ENCODE measurements at regions of chr1 and their contacts with region 1.

Region 1: DNA sequence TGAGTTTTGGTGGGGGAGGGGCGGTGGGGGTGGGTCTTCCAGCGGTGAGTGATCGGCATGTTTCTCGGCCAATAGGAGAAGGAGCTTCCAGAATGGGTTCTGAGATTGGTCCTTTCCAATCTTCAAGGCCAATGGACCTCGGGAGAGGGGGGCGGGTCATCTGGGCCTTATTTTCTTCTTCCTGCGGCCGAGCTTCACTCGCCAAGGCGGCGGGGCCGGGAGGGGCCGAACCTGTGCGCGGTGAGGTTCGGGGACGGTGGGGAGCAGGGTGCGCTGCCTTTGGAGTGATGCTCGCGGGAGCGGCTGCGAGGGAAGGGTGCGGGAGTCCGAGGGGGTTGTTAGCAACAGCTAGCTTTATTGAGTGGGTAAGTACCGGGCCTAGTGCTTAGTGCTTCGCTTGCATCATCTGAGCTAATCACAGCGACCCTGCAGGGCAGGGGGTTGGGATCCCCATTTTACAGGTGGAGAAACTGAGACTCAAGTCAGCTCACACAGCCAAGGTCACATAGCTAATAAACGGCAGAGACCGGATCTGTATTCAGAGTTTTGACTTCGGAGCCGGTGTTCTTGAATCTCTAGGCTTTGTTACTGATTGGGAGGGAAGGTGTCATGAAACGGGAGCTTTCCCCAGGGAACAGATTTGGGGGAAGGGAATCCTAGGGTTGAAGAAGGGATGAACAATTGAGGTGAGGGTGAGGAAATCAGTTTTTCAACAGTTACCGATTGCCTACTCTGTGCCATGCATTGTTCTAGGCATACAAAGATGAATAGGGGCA is 549 bp downstream of the KDM4A start:
- DNase-seq: peak; percentile 89
- ATAC-seq: peak; percentile 72
- H3K4me3 Mint-ChIP-seq: peak overlapping the region; percentile 92
- H3K27ac Mint-ChIP-seq: peak overlapping the region; percentile 99
- H3K4me1 Mint-ChIP-seq: peaks cover 26% of the 10 kb centered on the region
- H3K27me3 Mint-ChIP-seq: peaks cover 9% of the 10 kb centered on the region

Region 2: GRCh38 chr1:43383449-43383848 is 267.0 kb before region 1 on chr1:
- POLR2A ChIA-PET with region 1: no interaction called
- DNase-seq: no peak
- ATAC-seq: no peak
- H3K4me3 Mint-ChIP-seq: no peak overlapping the region
- H3K27ac Mint-ChIP-seq: no peak overlapping the region
- H3K4me1 Mint-ChIP-seq: peaks cover 16% of the 10 kb centered on the region
- H3K27me3 Mint-ChIP-seq: no peaks in the 10 kb centered on the region

Region 3: GRCh38 chr1:43405219-43405875 is 245.2 kb before region 1 on chr1:
- POLR2A ChIA-PET with region 1: no interaction called
- DNase-seq: no peak
- ATAC-seq: no peak
- H3K4me3 Mint-ChIP-seq: no peak overlapping the region
- H3K27ac Mint-ChIP-seq: no peak overlapping the region
- H3K4me1 Mint-ChIP-seq: peaks cover 2% of the 10 kb centered on the region
- H3K27me3 Mint-ChIP-seq: no peaks in the 10 kb centered on the region

Region 4: DNA sequence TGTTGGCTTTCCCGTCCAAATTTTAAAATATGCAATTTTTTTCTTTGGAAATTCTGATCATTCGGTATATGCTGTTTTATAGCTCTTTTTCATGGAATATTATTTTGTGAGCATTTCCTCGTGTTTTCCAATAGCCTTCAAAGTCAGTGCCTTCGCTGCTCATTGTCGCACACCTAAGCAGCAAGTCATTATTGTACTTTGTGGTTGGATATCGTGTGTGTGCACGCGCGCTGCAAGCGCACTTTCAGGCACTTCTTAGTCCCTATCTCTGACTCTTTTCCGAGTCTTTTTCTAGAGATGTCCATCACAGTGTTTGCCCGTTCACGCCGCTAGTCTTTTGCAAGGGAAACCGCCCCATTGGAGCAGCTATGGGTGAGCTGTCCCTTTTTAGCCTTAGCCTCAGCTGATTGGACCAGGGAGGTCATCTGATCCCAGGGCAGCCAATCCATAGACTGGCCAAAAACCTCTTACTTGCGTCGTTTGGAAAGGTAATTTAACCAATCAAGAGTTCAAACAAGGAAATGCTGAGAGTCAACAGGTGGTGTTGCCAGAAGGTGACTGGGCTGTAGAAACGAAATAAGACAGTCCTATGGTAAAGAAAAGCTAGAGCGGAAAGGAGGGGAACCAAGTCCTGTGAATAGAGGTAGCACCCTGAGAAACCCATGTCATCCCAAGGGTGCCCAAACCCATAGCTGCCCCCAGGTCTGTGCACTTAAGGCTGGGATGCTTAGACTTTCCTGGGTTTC is 196.1 kb before region 1 on chr1:
- POLR2A ChIA-PET with region 1: interaction called, 12 read pairs
- DNase-seq: peak; percentile 60
- ATAC-seq: peak; percentile 87
- H3K4me3 Mint-ChIP-seq: peak overlapping the region; percentile 84
- H3K27ac Mint-ChIP-seq: peak overlapping the region; percentile 80
- H3K4me1 Mint-ChIP-seq: peaks cover 16% of the 10 kb centered on the region
- H3K27me3 Mint-ChIP-seq: peaks cover 38% of the 10 kb centered on the region

Region 5: DNA sequence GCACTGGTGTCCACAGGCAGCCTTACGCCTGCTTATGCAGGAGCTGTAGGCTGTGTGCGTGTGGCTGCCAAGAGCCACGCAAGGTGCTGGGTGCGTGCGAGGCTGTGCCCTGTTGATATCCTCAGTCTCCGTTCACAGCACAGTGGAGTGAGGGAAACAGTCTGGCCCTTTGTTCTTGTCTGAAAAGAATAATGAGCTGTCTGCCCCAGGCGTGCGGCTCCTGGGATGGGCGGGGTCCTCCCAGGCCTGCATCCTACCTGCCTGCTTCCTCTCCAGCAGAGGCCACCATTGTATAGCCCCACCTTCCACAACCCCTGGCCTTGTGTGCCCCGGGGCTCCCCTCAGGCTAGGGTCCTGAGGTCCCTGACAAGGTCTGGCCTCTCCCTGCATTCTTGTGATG is 47.5 kb before region 1 on chr1:
- POLR2A ChIA-PET with region 1: no interaction called
- DNase-seq: no peak
- ATAC-seq: no peak
- H3K4me3 Mint-ChIP-seq: no peak overlapping the region
- H3K27ac Mint-ChIP-seq: no peak overlapping the region
- H3K4me1 Mint-ChIP-seq: no peaks in the 10 kb centered on the region
- H3K27me3 Mint-ChIP-seq: peaks cover 3% of the 10 kb centered on the region

Region 6: DNA sequence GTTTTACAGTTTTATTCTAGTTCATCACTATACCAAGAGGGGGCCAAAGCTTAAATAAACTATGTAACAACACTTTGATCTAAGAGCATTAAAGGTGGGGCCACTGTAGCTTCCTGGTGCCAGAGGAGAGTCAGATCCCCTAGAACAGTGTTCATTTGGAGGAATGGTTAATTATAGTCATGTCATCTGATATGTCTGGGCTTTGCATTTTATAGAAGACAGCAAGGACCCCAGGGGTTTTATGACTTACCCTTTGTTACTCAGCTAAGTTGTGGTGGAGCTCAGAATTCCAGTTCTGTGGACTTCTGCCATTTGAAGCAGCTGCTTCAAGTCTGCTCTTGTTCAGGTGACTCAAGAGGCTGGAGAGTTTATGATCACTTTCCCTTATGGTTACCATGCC is 16.1 kb after region 1 on chr1:
- POLR2A ChIA-PET with region 1: interaction called, 23 read pairs
- DNase-seq: no peak
- ATAC-seq: no peak
- H3K4me3 Mint-ChIP-seq: no peak overlapping the region
- H3K27ac Mint-ChIP-seq: no peak overlapping the region
- H3K4me1 Mint-ChIP-seq: peaks cover 2% of the 10 kb centered on the region
- H3K27me3 Mint-ChIP-seq: no peaks in the 10 kb centered on the region

Region 7: DNA sequence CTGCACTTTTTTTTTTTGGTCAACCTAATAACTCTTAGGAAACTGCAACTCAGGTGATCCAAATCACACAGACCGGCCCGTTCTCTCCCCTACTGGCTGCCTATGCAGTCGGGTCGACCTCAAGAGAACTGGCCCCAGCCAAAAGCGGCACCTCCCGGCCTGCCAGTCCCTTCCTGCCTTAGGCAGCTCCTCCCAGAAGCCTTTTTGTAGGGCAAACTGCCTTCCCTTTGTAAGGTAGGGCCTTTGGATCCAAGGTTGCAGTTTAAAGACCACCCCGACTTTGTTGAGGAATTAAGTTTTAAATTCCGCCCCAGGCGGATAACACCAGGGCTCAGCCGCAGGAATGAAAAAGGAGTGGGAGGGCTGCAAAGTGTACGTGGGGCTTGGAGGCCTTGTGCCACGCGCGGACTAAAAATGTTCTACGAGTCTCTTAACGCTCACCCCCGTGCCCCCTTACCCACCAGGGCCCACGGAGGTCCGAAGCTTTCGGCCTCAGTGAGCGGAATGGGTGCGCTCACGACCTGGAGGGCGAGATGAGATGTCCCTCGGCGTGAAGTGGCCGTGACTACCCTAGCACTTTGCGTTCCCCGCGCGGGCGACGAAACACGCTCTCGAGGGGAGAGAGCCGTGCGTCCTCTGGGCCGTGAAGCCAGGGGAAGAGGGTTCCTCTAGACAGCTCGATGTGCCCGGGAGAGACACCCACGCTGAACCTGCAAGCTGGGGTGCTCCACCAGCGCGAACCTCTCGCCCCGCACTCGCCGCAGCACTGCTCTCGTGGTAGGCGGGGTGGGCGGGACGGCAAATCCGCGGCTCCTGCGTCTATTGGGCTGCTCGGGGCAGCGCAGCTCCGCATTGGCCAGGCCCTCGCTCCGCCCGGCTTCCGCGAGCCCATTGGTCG is 56.3 kb after region 1 on chr1:
- POLR2A ChIA-PET with region 1: interaction called, 35 read pairs
- DNase-seq: peak; percentile 93
- ATAC-seq: peak; percentile 98
- H3K4me3 Mint-ChIP-seq: peak overlapping the region; percentile 83
- H3K27ac Mint-ChIP-seq: peak overlapping the region; percentile 72
- H3K4me1 Mint-ChIP-seq: peaks cover 42% of the 10 kb centered on the region
- H3K27me3 Mint-ChIP-seq: no peaks in the 10 kb centered on the region

Region 8: DNA sequence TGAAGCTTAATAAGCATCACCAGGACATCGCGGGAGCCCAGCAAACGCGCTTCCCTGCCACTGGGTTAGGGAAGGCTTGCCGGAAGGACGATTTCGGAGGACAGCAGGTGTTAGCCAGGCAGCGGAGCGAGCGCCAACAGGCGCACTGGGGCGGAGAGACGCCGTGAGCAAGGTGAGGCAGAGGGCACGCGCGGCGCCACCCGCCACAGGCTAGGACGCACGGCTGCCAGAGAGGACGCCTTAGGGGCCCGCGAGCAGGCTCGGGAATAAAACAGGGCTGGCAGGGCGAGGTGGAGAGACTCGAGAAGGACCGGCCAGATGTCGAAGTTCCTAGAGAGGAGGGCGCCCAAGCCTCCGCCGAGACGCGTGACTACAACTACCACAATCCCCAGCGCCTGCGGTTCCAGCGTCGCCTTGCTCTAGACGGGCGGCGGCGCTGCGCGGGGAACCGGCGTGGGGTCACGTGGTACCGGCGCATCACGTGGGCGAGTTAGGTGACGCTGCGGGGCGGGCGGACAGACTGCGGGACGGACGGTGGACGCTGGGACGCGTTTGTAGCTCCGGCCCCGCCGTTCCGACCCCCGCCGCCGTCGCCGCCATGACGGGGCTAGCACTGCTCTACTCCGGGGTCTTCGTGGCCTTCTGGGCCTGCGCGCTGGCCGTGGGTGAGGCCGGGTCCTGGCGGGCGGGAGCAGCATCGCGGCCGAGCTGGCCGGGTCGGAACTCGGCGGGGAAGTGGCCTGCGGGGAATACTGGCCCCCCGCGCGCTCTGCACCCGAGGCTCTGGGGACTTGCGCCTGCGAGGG is 324.1 kb after region 1 on chr1 and contains the start of gene ATP6V0B:
- POLR2A ChIA-PET with region 1: interaction called, 12 read pairs
- DNase-seq: peak; percentile 94
- ATAC-seq: peak; percentile 76
- H3K4me3 Mint-ChIP-seq: peak within 1 kb of the TSS; percentile 86
- H3K27ac Mint-ChIP-seq: peak within 1 kb of the TSS; percentile 88
- H3K4me1 Mint-ChIP-seq: peaks cover 44% of the 10 kb centered on the region
- H3K27me3 Mint-ChIP-seq: no peaks in the 10 kb centered on the region
- total RNA-seq, gene ATP6V0B: 90.4 to 94.2 TPM